Cardiac septum (tissue), 1 donor: ENCODE measurements at regions of chr2 and their contacts with region 1.

Region 1: GRCh38 chr2:72150157-72150865 is 2.6 kb upstream of the CYP26B1 start:
- DNase-seq: peak; percentile 88

Region 2: GRCh38 chr2:71545572-71546274 is 604.6 kb before region 1 on chr2:
- intact Hi-C with region 1: loop called (anchors 2 kb)
- DNase-seq: peak; percentile 74

Region 3: DNA sequence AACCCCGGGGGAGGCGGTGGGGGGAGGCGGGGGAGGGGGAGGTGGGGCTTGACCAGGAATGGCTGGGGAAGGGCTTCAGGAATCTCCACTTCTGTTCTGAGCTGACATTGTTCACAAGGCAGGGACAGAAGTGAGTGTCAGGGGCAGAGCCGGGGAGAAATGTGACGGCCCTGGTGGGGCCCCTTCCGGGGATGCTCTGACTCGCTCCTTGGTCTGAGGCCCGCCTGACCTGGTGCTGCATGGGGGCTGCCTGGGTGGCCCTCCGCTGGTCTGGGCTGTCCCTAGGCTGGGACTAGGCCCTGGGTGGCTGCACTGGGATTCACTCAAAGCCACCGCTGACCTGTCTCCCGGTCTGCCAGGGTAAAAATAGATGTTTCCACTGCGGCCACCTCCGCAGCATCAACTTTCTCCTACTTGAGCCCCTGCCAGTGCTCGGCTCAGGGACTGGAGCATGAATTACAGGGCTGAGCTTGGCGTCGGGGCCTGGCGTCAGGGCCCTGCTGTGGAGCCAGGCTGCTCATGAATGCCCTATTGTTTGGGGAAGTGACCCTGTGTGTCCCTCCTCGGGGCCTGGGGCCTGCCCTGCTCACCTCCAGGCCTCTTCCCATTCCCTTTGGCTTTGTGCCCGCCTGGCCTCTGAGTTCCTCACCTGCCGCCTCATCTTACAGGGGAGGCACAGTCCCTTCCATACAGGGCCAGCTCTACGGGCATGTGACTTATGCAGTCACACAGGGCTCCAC is 449.5 kb before region 1 on chr2:
- intact Hi-C with region 1: loop called (anchors 10 kb)
- DNase-seq: peak; percentile 90

Region 4: DNA sequence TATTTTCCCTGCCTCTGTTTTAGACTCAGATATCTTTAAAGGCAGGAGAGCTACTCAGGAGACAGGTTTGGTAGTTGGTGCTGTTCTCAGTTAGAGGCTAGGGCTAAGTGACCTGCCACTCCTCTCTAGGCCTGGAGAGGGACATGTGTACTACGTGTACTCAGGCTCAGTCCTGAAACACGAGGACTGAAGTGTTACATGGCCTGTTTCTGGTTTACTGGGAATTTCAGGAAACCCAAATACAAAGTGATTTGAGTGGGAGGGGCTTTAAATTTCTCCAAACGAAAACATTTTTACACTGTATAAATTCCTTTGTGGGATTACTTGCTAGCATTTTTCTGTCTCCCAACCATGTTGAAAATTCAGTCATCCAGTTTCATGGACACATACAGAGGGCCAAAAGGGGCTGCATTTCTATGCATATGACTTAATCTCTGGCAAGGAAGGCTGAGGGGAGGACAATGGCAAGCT is 346.0 kb before region 1 on chr2:
- intact Hi-C with region 1: loop called (anchors 2 kb)
- DNase-seq: no peak

Region 5: DNA sequence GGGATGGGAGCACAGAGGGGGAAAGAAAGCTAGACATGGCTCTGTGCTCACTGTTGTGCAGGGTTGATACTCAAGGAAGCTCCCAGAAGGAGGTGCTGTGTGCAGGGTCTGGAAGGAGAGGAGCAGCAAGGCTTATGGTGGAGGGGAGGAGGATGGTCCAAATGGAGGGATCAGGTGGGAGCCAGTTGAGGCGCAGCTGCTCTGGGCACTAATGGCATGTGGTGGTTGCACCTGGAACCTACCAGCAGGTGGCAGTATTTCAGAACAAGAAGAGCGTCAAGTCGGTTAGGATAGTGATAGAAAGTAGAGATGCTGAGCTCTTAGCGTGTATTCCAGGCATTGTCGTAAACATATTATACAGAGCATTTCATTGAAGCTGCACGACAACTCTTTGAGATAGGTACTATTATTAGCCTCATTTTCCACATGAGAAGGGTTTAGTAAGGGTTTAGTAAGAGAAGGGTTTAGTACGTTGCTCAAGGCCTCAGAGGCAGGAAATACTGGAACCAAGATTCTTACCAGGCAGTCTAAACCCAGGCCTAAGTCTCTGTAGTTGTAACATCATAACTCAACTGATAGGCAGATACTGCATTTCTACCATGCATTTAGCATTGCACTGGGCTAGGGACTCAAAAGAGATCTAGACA is 226.3 kb before region 1 on chr2:
- intact Hi-C with region 1: loop called (anchors 2 kb)
- DNase-seq: no peak

Region 6: GRCh38 chr2:72220170-72220569 is 69.9 kb after region 1 on chr2:
- intact Hi-C with region 1: no loop called
- DNase-seq: no peak

Region 7: GRCh38 chr2:72579591-72580180 is 429.4 kb after region 1 on chr2:
- intact Hi-C with region 1: loop called (anchors 10 kb)
- DNase-seq: no peak

Region 8: DNA sequence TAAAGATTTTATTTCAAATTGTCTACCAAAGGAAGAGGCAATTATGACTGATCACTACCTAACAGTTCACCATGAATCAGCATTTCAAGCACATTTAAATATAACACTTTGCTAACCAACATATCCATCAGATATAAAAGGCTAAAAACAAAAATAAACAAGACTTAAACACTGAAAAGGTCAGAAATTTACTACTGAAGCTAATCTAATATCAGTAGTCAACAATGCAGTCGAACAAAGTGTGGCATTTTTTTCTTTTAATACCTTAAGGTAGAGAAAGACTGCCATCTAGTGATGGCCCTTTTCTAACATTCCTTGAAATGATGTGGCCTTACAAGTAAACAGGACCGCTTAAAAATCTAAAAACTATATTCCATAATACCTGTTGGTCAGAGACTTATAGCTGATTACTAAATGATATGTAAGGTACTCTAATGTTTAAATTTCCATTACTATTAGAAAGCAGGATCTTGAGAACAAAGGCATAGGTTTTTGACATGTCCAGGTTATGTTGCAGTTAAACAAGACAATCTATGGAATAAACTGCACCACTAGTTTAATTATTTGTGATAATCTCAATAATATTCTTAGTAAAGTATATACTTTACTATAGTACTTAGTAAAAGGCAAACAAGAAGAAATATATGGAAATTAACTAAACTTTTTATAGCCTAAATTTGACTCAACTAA is 595.5 kb after region 1 on chr2:
- intact Hi-C with region 1: loop called (anchors 5 kb)
- DNase-seq: no peak